Left ventricle myocardium inferior (tissue), 1 donor: ENCODE measurements at regions of chr1 and their contacts with region 1.

Region 1: DNA sequence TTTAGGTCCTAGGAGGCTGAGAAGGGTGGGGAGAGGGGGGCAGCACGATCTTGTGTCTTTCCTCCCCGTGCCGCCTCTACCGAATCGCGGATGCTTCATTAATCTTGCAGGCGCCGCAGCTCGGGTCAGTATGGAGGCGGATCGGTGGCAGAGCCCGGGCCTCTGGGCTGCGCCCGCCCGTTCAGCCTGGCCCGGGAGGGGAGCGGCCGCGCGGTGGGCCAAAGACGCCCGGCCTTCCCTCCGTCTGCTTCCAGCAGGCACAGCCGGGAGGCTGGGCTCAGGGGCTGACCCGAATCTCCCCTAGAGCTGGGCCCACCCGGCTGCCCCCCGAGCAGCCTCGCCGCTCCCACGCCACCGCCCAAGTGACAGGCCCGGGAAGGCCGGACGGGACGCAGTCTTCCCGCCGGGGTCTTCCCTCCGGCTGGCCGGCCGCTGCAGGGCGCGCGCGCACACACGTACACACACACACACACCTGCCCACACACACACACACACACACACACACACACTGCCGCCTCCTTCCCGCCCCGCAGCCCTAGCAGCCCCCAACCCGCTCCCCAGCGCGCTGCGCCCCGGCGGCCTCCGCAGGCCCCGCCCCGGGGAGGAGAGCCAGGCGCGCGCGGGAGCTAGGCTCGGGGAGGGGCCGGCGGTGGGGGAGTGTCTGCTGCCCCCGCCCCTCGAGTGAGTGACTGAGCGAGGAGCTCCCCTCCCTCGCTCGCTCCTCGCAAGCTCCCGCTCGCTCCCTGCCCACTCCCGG is at the start of gene C1orf21:
- DNase-seq: peak; percentile 94
- H3K4me3 ChIP-seq: peak within 1 kb of the TSS; percentile 95
- H3K27ac ChIP-seq: peak within 1 kb of the TSS; percentile 94
- H3K4me1 ChIP-seq: peaks cover 54% of the 10 kb centered on the region
- H3K27me3 ChIP-seq: no peaks in the 10 kb centered on the region
- CTCF ChIP-seq: no peak
- total RNA-seq, gene C1orf21: 79.9 TPM

Region 2: GRCh38 chr1:184329962-184330868 is 56.3 kb before region 1 on chr1:
- intact Hi-C with region 1: no loop called
- DNase-seq: no peak
- H3K4me3 ChIP-seq: no peak overlapping the region
- H3K27ac ChIP-seq: peak overlapping the region; percentile 74
- H3K4me1 ChIP-seq: peaks cover 22% of the 10 kb centered on the region
- H3K27me3 ChIP-seq: no peaks in the 10 kb centered on the region
- CTCF ChIP-seq: no peak

Region 3: GRCh38 chr1:184340984-184341383 is 45.5 kb before region 1 on chr1:
- intact Hi-C with region 1: no loop called
- DNase-seq: no peak
- H3K4me3 ChIP-seq: no peak overlapping the region
- H3K27ac ChIP-seq: no peak overlapping the region
- H3K4me1 ChIP-seq: no peaks in the 10 kb centered on the region
- H3K27me3 ChIP-seq: no peaks in the 10 kb centered on the region
- CTCF ChIP-seq: peak; percentile 35

Region 4: GRCh38 chr1:184563308-184563707 is 176.8 kb after region 1 on chr1:
- intact Hi-C with region 1: loop called (anchors 5 kb)
- DNase-seq: no peak
- H3K4me3 ChIP-seq: no peak overlapping the region
- H3K27ac ChIP-seq: peak overlapping the region; percentile 74
- H3K4me1 ChIP-seq: peaks cover 37% of the 10 kb centered on the region
- H3K27me3 ChIP-seq: no peaks in the 10 kb centered on the region
- CTCF ChIP-seq: peak; percentile 72